SK-N-SH (cell line): ENCODE measurements at regions of chr14 and their contacts with region 1.

Region 1: DNA sequence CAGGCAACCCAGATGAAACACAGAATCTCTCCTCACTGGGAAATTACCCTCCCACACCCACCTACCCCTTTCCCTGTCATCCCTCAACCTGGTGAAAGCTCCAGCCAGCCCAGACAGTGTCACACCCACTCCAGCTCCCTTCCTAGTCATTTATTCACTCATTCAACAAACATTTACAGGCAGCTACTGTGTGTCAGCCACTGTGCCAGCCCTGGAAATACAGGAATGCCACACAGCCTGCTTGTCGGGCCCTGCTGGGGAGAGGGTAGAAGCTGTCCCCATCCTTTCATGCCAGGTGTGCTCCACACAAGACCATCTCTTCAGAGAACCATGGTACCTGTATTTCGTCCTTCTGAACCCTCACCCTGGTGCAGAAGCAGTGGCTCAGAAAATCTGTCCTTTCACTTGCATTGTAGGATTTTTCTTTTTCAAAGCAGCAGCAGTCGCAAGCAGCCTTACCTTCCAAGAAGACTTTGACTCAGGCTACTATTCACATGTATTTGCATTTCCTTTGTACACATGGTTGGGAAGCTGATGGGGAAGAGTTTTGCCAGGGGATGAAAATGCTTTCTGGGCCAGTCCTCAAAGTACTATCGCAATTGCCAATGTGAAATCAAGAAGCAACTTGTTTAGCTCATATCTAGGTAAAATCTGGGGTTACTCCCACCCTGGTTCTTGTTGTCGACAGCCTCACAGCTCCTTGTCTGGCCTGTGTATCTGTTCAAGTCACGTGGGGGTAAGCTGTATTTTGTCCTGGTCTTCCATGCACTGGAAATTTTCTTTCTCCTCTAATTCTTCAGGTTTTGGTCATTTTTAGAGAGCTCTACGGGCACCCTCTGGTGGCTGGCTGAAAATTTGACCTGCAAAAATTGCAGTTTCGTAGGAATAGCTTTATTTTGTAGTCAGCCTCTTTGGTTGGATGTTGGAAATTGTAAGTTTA is 147.4 kb upstream of the EGLN3 start:
- DNase-seq: peak; percentile 70
- H3K4me3 ChIP-seq: no peak overlapping the region
- H3K27ac ChIP-seq: no peak overlapping the region
- H3K4me1 ChIP-seq: peaks cover 0 to 3% of the 10 kb centered on the region in 2 experiments; a peak in 1 of 4 replicates
- H3K27me3 ChIP-seq: no peaks in the 10 kb centered on the region; the same call in 1 of the 2 replicates
- CTCF ChIP-seq: peak; percentile 72
- EP300 ChIP-seq: no peak
- RAD21 ChIP-seq: peak; percentile 90

Region 2: DNA sequence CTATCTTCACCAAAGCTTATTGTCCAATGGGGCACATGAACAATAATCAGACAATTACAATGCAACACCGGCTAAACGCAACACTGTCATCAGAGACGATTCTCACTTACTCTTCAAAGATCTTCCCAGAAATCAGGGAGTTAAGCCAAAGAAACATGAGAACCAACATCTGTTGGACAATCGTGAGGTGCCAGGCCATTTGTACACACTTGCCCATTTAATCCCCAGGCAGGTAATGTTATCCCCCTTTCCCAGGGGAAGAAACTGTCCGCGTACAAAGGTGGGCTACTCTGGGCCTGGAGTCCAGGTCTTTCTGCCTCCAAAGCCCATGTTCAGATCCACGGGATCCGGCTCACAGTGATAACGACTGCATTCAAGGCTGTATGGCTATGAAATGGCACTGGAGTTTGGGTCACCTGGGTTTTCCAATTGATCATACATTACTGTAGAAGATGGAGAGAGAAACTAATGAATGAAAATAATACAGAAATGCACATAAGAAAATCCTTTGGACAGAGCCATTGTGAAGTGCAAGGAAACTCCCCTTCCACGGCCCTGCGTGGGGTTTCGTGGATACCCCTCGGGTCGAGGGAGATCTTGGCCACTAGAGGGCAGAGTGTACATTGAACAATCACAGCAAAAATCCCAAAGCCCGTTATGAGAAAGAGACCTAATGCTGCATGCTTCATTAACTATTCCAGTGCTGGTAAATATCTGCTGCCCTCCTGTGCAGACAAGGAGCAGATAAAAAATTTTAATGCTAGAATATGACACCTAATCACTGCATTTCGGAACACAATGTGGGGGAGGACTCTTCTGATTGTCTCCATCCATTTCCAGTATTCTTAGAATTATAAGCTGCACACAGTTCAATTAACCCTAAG is 258.9 kb before region 1 on chr14:
- CTCF ChIA-PET with region 1: interaction called, 337 read pairs
- POLR2A ChIA-PET with region 1: interaction called, 3 read pairs
- DNase-seq: peak; percentile 76
- H3K4me3 ChIP-seq: no peak overlapping the region; a peak in 1 of 4 replicates
- H3K27ac ChIP-seq: no peak overlapping the region
- H3K4me1 ChIP-seq: no peaks in the 10 kb centered on the region; a peak in 1 of 4 replicates
- H3K27me3 ChIP-seq: peaks cover 6% of the 10 kb centered on the region; the same call in 1 of the 2 replicates
- CTCF ChIP-seq: peak; percentile 87
- EP300 ChIP-seq: no peak
- RAD21 ChIP-seq: peak; percentile 88

Region 3: DNA sequence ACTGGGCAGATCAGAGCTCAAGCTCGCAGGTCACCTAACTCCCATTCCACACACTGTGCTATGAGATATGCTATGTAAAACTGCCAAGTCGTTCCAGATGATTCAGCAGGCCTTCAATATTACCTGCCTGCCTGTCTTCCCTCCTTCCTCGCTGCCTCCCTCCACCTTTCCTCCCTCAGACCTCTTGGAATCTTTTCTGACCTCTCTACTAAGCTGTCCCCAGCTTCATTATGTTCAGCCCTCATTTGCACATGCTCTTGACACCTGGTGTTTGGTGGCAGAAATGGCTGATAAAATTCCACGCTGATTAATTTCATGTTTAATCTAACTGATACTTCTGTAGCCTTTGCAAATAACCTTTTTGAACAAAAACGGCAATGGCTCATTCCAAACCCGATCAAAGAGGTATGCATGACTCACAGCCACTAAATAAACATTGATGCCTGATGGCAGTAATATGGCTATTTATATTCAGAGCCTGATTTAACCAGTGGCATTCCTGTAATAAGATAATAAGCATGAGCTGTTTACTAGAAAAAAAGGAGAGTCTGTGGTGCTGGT is 16.7 kb before region 1 on chr14:
- CTCF ChIA-PET with region 1: interaction called, 13 read pairs
- POLR2A ChIA-PET with region 1: no interaction called
- DNase-seq: no peak
- H3K4me3 ChIP-seq: no peak overlapping the region
- H3K27ac ChIP-seq: no peak overlapping the region
- H3K4me1 ChIP-seq: peaks cover 3 to 5% of the 10 kb centered on the region in 2 experiments; a peak in 3 of 4 replicates
- H3K27me3 ChIP-seq: no peaks in the 10 kb centered on the region; the same call in 1 of the 2 replicates
- CTCF ChIP-seq: no peak
- EP300 ChIP-seq: no peak
- RAD21 ChIP-seq: no peak

Region 4: DNA sequence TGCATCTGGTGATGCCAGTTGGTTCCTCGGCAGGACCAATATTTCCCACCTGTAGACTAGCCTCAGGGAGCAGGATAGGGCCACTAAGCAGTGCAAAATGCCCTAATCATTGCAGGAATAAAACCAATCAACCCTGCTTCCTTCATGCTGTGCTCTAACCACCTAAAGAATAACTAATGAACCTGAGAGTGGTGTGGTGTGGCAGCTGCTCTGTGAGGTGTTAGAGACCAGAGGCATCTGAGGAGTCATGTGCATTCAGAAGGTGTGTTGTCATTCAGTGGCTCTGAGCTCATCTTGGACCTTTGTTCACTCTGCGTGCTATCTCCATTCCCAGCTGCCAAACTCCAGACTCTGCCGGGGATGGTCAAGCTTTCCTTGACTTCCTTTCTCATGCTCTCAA is 10.8 kb before region 1 on chr14:
- CTCF ChIA-PET with region 1: interaction called, 13 read pairs
- POLR2A ChIA-PET with region 1: no interaction called
- DNase-seq: no peak
- H3K4me3 ChIP-seq: no peak overlapping the region
- H3K27ac ChIP-seq: no peak overlapping the region
- H3K4me1 ChIP-seq: no peaks in the 10 kb centered on the region
- H3K27me3 ChIP-seq: peaks cover 11% of the 10 kb centered on the region; the same call in 1 of the 2 replicates
- CTCF ChIP-seq: no peak
- EP300 ChIP-seq: no peak
- RAD21 ChIP-seq: no peak

Region 5: GRCh38 chr14:34113005-34113511 is 14.7 kb after region 1 on chr14:
- CTCF ChIA-PET with region 1: interaction called, 17 read pairs
- POLR2A ChIA-PET with region 1: no interaction called
- DNase-seq: no peak
- H3K4me3 ChIP-seq: no peak overlapping the region; a peak in 1 of 4 replicates
- H3K27ac ChIP-seq: no peak overlapping the region
- H3K4me1 ChIP-seq: peaks cover 0 to 5% of the 10 kb centered on the region in 2 experiments; a peak in 2 of 4 replicates
- H3K27me3 ChIP-seq: no peaks in the 10 kb centered on the region
- CTCF ChIP-seq: no peak
- EP300 ChIP-seq: peak in 1 of 2 experiments; percentile 28; a peak in 1 of 4 replicates
- RAD21 ChIP-seq: no peak

Region 6: DNA sequence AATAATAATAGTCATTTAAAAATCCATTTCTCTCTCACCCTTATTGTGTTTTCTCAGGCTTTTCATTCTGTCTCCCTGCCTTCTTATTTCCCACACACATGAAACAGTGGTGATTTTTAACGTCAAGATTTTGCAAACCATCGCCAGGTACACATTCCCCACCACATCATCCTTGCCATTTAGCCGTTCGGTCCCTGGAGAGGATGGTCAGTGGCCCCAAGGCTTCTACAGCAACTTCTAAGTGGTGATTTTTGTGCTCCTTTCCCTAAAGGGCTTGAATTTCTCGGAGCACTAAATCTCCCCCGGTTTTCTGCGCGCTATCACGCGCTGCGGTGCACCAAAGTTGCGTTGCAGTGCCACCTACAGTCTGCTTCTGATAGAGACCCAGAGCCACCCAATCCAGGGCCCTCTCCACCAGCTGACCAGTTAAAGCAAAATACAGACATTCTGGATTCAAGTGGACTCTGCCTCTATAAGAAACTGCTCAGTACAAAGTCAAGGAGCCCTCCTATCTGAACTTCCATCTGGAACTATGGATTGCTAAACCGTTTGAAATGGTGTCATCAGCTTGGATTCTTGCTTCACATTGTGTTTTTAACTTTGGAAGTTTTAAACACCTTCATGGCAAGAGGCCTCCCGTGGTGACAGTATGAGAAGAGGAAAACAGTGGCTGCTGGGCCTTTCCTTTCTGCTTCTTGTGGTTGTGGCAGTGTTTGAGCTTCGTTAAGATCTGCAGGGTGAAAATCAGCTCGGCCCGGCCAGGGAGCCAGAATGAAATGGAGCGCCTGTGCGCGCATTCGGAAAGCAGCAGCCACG is 129.7 kb after region 1 on chr14:
- CTCF ChIA-PET with region 1: interaction called, 18 read pairs
- POLR2A ChIA-PET with region 1: no interaction called
- DNase-seq: peak; percentile 81
- H3K4me3 ChIP-seq: peak overlapping the region; percentile 12 to 23; a peak in 2 of 4 replicates
- H3K27ac ChIP-seq: no peak overlapping the region
- H3K4me1 ChIP-seq: peaks cover 0 to 2% of the 10 kb centered on the region in 2 experiments; a peak in 1 of 4 replicates
- H3K27me3 ChIP-seq: peaks cover 6% of the 10 kb centered on the region; the same call in 1 of the 2 replicates
- CTCF ChIP-seq: peak; percentile 83
- EP300 ChIP-seq: no peak
- RAD21 ChIP-seq: peak; percentile 84